ENCODE measurements at regions of chr22 and their contacts with region 1.

Region 1: GRCh38 chr22:26648011-26648497 is 9.3 kb upstream of the MIAT start:
- DNase-seq: peak in 1 of 2 donors; percentile 69
- ATAC-seq: peak in 2 of 3 donors; percentile 38 to 58
- H3K4me3 ChIP-seq: no peak overlapping the region
- H3K4me3 Mint-ChIP-seq: peak overlapping the region; percentile 65
- H3K27ac ChIP-seq: no peak overlapping the region
- H3K27ac Mint-ChIP-seq: peak overlapping the region; percentile 76 to 81
- H3K4me1 ChIP-seq: peaks cover 53% of the 10 kb centered on the region
- H3K4me1 Mint-ChIP-seq: peaks cover 64% of the 10 kb centered on the region in 2 donors
- H3K27me3 ChIP-seq: no peaks in the 10 kb centered on the region
- H3K27me3 Mint-ChIP-seq: no peaks in the 10 kb centered on the region
- CTCF ChIP-seq: no peak

Region 2: DNA sequence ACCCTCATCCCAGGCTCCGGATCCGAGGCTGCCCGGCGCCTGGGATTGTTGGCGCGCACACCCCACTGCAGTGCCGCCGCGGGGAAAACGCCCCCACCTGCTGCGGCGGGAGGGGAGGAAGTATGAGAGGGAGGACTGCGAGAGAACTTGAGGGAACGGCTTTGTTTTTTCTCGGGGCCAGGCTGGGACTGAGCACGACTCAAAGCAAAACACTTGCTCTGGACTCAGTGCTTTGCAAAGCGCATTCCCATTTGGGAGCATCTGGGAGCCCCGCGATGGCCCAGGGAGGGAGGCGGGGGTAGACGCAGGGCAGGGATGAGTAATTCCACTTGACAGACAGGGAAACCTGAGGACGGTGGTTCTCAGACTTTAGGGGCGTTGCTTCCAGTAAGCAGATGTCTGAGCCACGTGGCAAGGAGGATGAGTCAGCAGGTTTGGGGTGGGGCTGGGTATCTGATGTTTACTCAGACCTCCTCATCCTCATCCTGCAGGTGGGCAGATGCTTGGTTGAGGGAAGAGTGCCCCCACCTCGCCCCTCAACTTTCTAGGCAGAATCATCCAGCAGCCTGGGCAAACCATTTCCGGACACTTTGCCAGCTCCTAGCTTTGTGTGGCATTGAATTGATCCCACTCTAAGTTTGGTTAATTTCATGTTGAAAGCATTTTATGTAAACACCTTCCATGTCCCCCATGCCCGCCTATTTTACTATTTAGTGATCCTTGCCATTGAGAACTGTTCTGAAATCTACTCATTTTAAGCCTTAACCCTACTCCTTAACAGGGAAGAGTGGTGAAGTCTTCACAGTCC is 10.8 kb after region 1 on chr22:
- intact Hi-C with region 1: loop called (anchors 1 kb)
- DNase-seq: peak; percentile 58 to 81
- ATAC-seq: peak; percentile 67 to 68 (median 68)
- H3K4me3 ChIP-seq: peak overlapping the region; percentile 34
- H3K4me3 Mint-ChIP-seq: peak overlapping the region; percentile 82
- H3K27ac ChIP-seq: no peak overlapping the region
- H3K27ac Mint-ChIP-seq: peak overlapping the region; percentile 77 to 88
- H3K4me1 ChIP-seq: peaks cover 29% of the 10 kb centered on the region
- H3K4me1 Mint-ChIP-seq: peaks cover 22 to 33% of the 10 kb centered on the region in 2 donors
- H3K27me3 ChIP-seq: peaks cover 6% of the 10 kb centered on the region
- H3K27me3 Mint-ChIP-seq: peaks cover 0 to 8% of the 10 kb centered on the region in 2 donors
- CTCF ChIP-seq: no peak

Region 3: DNA sequence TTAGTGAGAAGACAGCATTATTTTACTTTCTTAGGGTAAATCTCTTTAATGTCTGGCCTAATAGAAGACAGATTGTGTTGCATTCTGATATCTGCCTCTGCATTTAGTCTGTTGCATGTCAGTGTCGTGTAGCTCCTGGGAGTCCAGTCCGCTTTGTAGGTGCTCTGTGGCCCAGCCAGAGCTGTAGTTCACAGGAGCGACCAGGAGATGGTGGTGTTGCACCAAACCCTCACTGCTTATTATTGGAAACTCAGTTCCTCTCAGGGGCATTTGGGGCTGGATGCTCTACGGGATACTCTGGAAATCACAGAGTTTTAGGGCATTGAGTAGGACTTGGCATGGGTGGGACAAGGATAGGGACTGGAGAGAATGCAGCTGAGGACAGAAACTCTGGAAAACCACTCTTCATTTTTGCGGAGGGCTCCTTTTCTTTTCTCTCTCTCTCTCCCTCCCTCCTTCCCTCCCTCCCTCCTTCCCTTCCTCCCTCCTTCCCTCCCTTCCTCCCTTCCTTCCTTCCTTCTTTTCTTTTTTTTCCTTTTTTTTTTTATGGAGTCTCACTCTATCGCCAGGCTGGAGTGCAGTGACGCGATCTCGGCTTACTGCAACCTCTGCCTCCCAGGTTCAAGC is 31.1 kb after region 1 on chr22:
- intact Hi-C with region 1: no loop called
- DNase-seq: peak; percentile 62 to 84
- ATAC-seq: peak; percentile 86 to 94 (median 91)
- H3K4me3 ChIP-seq: no peak overlapping the region
- H3K4me3 Mint-ChIP-seq: no peak overlapping the region
- H3K27ac ChIP-seq: no peak overlapping the region
- H3K27ac Mint-ChIP-seq: peak overlapping the region; percentile 67 to 69
- H3K4me1 ChIP-seq: peaks cover 35% of the 10 kb centered on the region
- H3K4me1 Mint-ChIP-seq: peaks cover 49 to 69% of the 10 kb centered on the region in 2 donors
- H3K27me3 ChIP-seq: no peaks in the 10 kb centered on the region
- H3K27me3 Mint-ChIP-seq: no peaks in the 10 kb centered on the region
- CTCF ChIP-seq: peak; percentile 95

Measured in natural killer cell (primary cell).